ENCODE measurements at regions of chr15 and their contacts with region 1.

Region 1: GRCh38 chr15:76973362-76973743 is 21.6 kb upstream of the PSTPIP1 start:
- DNase-seq: no peak
- ATAC-seq: peak; percentile 86
- H3K4me3 ChIP-seq: no peak overlapping the region
- H3K27ac ChIP-seq: no peak overlapping the region
- H3K4me1 ChIP-seq: no peaks in the 10 kb centered on the region
- H3K27me3 ChIP-seq: no peaks in the 10 kb centered on the region
- CTCF ChIP-seq: peak; percentile 72 to 79 (median 73)
- EP300 ChIP-seq: no peak
- POLR2A ChIP-seq: no peak
- RAD21 ChIP-seq: peak; percentile 89

Region 2: DNA sequence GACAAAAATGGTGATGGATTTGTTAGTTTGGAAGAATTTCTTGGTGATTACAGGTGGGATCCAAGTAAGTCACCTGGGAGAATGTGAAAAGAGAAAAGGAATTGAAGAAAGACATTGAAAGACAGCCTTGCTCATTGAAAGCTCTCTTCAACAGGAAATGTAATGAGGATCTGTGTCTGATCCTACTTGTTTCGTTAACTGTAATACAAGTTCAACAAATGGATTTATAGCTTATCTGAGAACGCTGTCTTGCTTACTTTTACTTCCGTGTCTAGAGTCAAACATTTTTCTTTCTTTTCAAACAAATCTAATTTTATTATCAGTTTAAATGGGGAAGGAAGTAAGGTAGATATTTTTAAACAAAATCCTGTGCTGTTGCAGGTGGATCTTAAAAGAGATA is 25.9 kb before region 1 on chr15:
- CTCF ChIA-PET with region 1: interaction called, 16 read pairs
- POLR2A ChIA-PET with region 1: no interaction called
- RAD21 ChIA-PET with region 1: interaction called, 3 read pairs
- SMC1A ChIA-PET with region 1: interaction called, 6 read pairs
- in situ Hi-C with region 1: no loop called
- intact Hi-C with region 1: no loop called
- DNase-seq: no peak
- ATAC-seq: no peak
- H3K4me3 ChIP-seq: no peak overlapping the region
- H3K27ac ChIP-seq: no peak overlapping the region
- H3K4me1 ChIP-seq: no peaks in the 10 kb centered on the region
- H3K27me3 ChIP-seq: no peaks in the 10 kb centered on the region
- CTCF ChIP-seq: no peak
- EP300 ChIP-seq: no peak
- POLR2A ChIP-seq: no peak
- RAD21 ChIP-seq: no peak

Region 3: GRCh38 chr15:77013776-77014131 is 40.4 kb after region 1 on chr15:
- CTCF ChIA-PET with region 1: interaction called, 57 read pairs
- POLR2A ChIA-PET with region 1: interaction called, 10 read pairs
- RAD21 ChIA-PET with region 1: interaction called, 259 read pairs
- SMC1A ChIA-PET with region 1: interaction called, 375 read pairs
- in situ Hi-C with region 1: no loop called
- intact Hi-C with region 1: no loop called
- DNase-seq: no peak
- ATAC-seq: peak; percentile 82
- H3K4me3 ChIP-seq: no peak overlapping the region
- H3K27ac ChIP-seq: peak overlapping the region; percentile 66; the same call in 1 of the 2 replicates
- H3K4me1 ChIP-seq: peaks cover 31% of the 10 kb centered on the region
- H3K27me3 ChIP-seq: no peaks in the 10 kb centered on the region
- CTCF ChIP-seq: 0 out of 6 replicates have a peak, but pooled peaks of 1 of the 3 experiments have one; percentile 1
- EP300 ChIP-seq: peak; percentile 52 to 54; a peak in 3 of 4 replicates
- POLR2A ChIP-seq: no peak
- RAD21 ChIP-seq: no peak

Region 4: DNA sequence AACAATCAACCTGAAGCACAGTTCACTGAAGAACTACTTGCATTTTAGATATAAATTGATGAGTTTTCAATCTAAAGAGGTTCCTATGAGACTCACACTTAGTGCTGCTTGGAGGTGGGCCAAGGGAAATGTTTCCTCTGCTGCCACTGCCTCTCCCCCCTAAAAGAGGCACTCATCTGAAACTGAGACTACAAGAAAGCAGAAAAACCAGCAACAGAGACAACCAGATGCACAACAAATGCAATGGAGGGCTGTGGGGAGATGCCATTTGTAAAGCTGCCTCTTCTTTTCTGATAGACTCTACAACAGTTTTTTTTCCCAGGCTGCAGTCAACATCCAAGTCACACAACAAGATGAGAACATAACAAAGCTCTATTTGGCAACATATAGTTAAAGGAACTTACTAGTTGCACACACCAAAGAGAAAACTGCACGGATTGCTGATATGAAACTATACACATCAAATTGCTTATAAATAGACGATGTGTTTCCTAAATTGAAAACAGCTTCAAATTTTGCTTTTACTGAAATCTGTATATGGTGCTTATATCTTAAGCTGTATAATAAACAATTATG is 86.5 kb after region 1 on chr15:
- CTCF ChIA-PET with region 1: interaction called, 12 read pairs
- POLR2A ChIA-PET with region 1: no interaction called
- RAD21 ChIA-PET with region 1: interaction called, 3 read pairs
- SMC1A ChIA-PET with region 1: interaction called, 22 read pairs
- in situ Hi-C with region 1: no loop called
- intact Hi-C with region 1: no loop called
- DNase-seq: peak; percentile 34
- ATAC-seq: peak; percentile 83
- H3K4me3 ChIP-seq: peak overlapping the region; percentile 50
- H3K27ac ChIP-seq: peak overlapping the region; percentile 55
- H3K4me1 ChIP-seq: peaks cover 12% of the 10 kb centered on the region
- H3K27me3 ChIP-seq: no peaks in the 10 kb centered on the region
- CTCF ChIP-seq: no peak
- EP300 ChIP-seq: no peak
- POLR2A ChIP-seq: no peak
- RAD21 ChIP-seq: no peak

Region 5: DNA sequence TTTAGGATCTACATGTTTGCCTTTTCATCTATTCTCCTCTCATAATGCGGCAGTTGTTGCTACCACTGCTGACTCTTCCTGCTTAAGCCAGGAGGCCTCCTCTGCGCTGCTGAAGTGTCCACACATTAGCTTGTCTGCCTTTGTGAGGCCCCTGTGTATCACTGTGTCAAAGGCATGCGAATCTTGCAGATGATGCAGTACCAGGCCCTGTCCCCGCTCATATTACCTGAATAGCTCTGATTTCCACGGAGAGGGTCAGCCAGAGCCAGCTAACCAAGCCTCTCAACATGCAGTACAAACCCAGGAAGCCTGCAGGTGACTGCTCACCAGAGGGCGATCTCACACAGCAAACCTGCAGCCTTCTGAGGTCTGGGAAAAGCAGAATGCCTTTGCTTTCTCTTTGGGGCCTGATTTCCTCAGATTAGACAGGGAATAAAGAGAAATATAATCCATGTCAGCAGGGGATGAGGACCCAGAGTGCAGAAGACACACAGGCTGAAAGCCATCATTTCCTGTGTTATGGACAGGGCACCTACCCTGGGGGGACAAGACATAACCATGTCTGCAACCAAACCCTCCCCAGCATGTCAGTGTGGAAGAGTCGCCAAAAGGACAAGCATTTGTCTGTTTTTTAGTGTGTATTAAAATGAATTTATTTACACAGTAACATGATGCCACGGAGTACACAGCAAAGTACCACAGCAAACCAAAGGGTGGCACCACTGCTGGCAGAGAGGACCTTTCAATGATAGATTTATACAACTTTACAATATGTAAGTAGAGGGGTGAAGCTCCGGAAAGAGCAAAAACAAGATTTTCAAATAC is 134.4 kb after region 1 on chr15:
- CTCF ChIA-PET with region 1: interaction called, 23 read pairs
- POLR2A ChIA-PET with region 1: no interaction called
- RAD21 ChIA-PET with region 1: interaction called, 9 read pairs
- SMC1A ChIA-PET with region 1: interaction called, 23 read pairs
- in situ Hi-C with region 1: no loop called
- intact Hi-C with region 1: no loop called
- DNase-seq: no peak
- ATAC-seq: peak; percentile 82
- H3K4me3 ChIP-seq: no peak overlapping the region
- H3K27ac ChIP-seq: no peak overlapping the region
- H3K4me1 ChIP-seq: no peaks in the 10 kb centered on the region
- H3K27me3 ChIP-seq: no peaks in the 10 kb centered on the region
- CTCF ChIP-seq: peak; percentile 61 to 76 (median 69)
- EP300 ChIP-seq: no peak
- POLR2A ChIP-seq: no peak
- RAD21 ChIP-seq: peak; percentile 78

Region 6: GRCh38 chr15:77496710-77497103 is 523.4 kb after region 1 on chr15:
- CTCF ChIA-PET with region 1: interaction called, 33 read pairs
- POLR2A ChIA-PET with region 1: no interaction called
- RAD21 ChIA-PET with region 1: interaction called, 17 read pairs
- SMC1A ChIA-PET with region 1: interaction called, 7 read pairs
- in situ Hi-C with region 1: no loop called
- intact Hi-C with region 1: no loop called
- DNase-seq: no peak
- ATAC-seq: peak; percentile 92
- H3K4me3 ChIP-seq: no peak overlapping the region
- H3K27ac ChIP-seq: no peak overlapping the region
- H3K4me1 ChIP-seq: peaks cover 20% of the 10 kb centered on the region
- H3K27me3 ChIP-seq: no peaks in the 10 kb centered on the region
- CTCF ChIP-seq: peak; percentile 89 to 96 (median 96)
- EP300 ChIP-seq: no peak
- POLR2A ChIP-seq: no peak
- RAD21 ChIP-seq: peak; percentile 95